ENCODE measurements at regions of chr12 and their contacts with region 1.

Region 1: GRCh38 chr12:10771132-10771733 is 31.2 kb downstream of the TAS2R7 start:
- DNase-seq: peak in 1 of 2 donors; percentile 75
- ATAC-seq: peak; percentile 58 to 74 (median 65)
- H3K4me3 ChIP-seq: no peak overlapping the region
- H3K4me3 Mint-ChIP-seq: no peak overlapping the region
- H3K27ac ChIP-seq: no peak overlapping the region
- H3K27ac Mint-ChIP-seq: no peak overlapping the region
- H3K4me1 ChIP-seq: no peaks in the 10 kb centered on the region
- H3K4me1 Mint-ChIP-seq: no peaks in the 10 kb centered on the region
- H3K27me3 ChIP-seq: peaks cover 22% of the 10 kb centered on the region
- H3K27me3 Mint-ChIP-seq: peaks cover 47 to 64% of the 10 kb centered on the region in 2 donors
- CTCF ChIP-seq: peak; percentile 77

Region 2: DNA sequence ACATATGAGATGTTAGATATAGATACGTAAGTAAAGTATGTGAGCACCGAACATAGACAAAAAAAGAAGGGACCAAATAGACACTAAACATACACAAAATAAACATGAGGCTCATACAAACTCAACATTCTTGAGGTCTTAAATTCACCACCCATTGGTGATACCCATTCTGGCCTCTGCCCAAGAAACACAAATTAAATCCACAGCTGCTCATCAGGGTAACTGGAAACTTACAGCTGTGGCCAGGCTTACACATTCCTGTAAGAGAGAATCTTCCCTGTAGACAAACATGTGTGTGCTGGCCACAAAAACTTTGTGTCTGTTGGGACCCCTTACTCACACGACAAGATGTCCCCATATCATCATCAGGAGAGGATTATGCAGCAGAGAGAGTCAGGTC is 180.3 kb before region 1 on chr12:
- intact Hi-C with region 1: no loop called
- DNase-seq: no peak
- ATAC-seq: no peak
- H3K4me3 ChIP-seq: no peak overlapping the region
- H3K4me3 Mint-ChIP-seq: no peak overlapping the region
- H3K27ac ChIP-seq: no peak overlapping the region
- H3K27ac Mint-ChIP-seq: no peak overlapping the region
- H3K4me1 ChIP-seq: no peaks in the 10 kb centered on the region
- H3K4me1 Mint-ChIP-seq: no peaks in the 10 kb centered on the region
- H3K27me3 ChIP-seq: no peaks in the 10 kb centered on the region
- H3K27me3 Mint-ChIP-seq: no peaks in the 10 kb centered on the region
- CTCF ChIP-seq: no peak

Region 3: DNA sequence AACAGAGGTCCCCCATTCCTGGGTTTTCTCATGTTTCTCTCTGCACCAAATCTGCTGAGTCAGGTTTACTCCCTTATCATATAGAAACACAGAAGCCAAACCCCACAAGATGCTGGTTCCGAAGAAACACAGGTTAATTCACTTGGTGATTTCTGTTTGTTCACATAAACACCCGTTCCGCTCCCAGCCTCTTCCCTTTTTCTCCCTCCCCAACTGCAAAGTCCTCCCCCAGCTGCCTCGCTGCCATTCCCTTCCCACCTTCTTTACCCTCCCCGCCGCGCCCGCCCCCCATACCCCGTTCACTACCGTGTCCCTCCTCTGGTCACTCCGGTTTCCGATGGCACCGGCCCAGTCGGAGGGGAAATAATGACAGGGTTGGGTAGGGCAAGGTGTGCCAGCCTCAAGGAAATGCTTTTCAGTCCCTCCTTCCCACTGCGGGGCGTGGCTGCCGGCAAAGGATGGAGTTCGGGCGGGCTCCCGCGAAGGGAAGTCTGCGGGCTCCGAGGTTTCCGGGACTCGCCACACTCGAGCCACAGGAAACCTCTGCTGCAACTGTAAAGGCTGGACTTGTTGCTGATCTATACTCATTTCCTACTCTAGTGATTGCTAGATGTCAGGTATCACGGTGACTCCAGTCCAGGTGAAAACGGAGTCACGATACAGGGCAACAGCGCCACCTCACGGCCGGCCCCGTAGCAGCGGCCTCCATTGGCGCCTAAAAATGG is 97.4 kb before region 1 on chr12 and contains the start of gene STYK1:
- intact Hi-C with region 1: no loop called
- DNase-seq: peak; percentile 65 to 86
- ATAC-seq: peak; percentile 59 to 80 (median 76)
- H3K4me3 ChIP-seq: peak within 1 kb of the TSS; percentile 34
- H3K4me3 Mint-ChIP-seq: peak within 1 kb of the TSS; percentile 80
- H3K27ac ChIP-seq: peak within 1 kb of the TSS; percentile 40
- H3K27ac Mint-ChIP-seq: peak within 1 kb of the TSS; percentile 64 to 74
- H3K4me1 ChIP-seq: peaks cover 30% of the 10 kb centered on the region
- H3K4me1 Mint-ChIP-seq: peaks cover 42 to 48% of the 10 kb centered on the region in 2 donors
- H3K27me3 ChIP-seq: peaks cover 20% of the 10 kb centered on the region
- H3K27me3 Mint-ChIP-seq: peaks cover 22 to 40% of the 10 kb centered on the region in 2 donors
- CTCF ChIP-seq: peak; percentile 94
- total RNA-seq, gene STYK1: 2.0 to 2.6 (median 2.4) TPM

Region 4: DNA sequence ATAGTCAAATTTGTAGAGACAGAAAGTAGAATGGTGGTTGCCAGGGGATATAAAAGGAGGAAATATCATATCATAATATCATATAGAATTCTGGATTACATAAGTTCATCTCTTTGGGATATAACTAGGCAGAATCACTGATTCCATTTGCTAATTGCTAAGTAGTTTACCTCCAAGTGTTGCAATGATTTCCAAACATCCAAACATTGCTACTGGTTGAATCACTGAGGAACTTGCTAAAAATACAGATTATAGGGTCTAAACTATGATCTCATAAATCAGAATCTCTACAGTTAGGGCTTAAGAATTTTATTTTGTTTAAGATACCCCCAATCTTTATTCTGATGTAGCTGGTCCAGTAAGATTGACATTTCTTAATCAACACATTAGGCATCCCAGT is 431.6 kb after region 1 on chr12:
- intact Hi-C with region 1: loop called (anchors 1 kb)
- DNase-seq: no peak
- ATAC-seq: no peak
- H3K4me3 ChIP-seq: no peak overlapping the region
- H3K4me3 Mint-ChIP-seq: no peak overlapping the region
- H3K27ac ChIP-seq: no peak overlapping the region
- H3K27ac Mint-ChIP-seq: no peak overlapping the region
- H3K4me1 ChIP-seq: no peaks in the 10 kb centered on the region
- H3K4me1 Mint-ChIP-seq: no peaks in the 10 kb centered on the region
- H3K27me3 ChIP-seq: no peaks in the 10 kb centered on the region
- H3K27me3 Mint-ChIP-seq: no peaks in the 10 kb centered on the region
- CTCF ChIP-seq: no peak

Region 5: GRCh38 chr12:11486623-11487444 is 715.6 kb after region 1 on chr12:
- intact Hi-C with region 1: loop called (anchors 1 kb)
- DNase-seq: peak; percentile 72 to 94
- ATAC-seq: peak; percentile 94 to 99 (median 99)
- H3K4me3 ChIP-seq: no peak overlapping the region
- H3K4me3 Mint-ChIP-seq: no peak overlapping the region
- H3K27ac ChIP-seq: no peak overlapping the region
- H3K27ac Mint-ChIP-seq: no peak overlapping the region
- H3K4me1 ChIP-seq: no peaks in the 10 kb centered on the region
- H3K4me1 Mint-ChIP-seq: peaks cover 6 to 10% of the 10 kb centered on the region in 2 donors
- H3K27me3 ChIP-seq: no peaks in the 10 kb centered on the region
- H3K27me3 Mint-ChIP-seq: peaks cover 3 to 34% of the 10 kb centered on the region in 2 donors
- CTCF ChIP-seq: peak; percentile 100

Region 6: DNA sequence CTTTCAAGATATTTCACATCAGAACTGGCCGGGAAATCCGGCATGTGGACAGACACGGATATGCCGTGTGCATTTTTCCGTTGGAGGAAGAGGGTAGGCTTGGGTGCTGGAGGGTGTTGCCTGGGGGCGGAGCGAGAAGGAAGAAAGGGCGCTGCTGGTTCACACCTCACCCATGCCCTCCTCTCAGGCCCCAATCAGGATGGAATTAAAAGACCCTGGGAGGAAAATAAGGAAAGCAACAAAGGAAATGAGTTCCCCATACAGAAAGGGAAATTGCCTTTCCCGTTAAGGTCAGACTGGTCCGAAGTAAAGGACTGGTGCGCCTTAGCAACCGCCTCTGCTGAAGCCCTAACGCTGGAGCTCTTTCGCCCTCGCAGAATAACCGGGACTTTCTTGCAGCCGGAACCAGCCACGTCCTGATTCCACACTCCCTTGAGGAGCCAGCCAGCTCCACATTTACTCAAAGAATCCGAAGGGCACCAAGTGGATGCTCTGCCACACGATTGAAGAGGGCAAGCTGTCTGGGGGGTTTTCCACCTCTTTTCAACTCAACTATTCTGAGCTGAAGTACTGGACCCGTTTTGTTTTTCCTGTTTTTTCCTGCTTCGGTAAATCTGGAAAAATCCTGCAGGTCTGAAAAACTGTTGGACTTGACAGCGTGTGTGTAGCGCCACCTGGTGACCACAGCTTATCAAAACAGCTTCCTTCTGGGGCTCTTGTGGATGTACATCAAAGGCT is 1261.8 kb after region 1 on chr12:
- intact Hi-C with region 1: loop called (anchors 10 kb)
- DNase-seq: peak; percentile 39 to 86
- ATAC-seq: peak; percentile 71 to 83 (median 77)
- H3K4me3 ChIP-seq: peak overlapping the region; percentile 44
- H3K4me3 Mint-ChIP-seq: peak overlapping the region; percentile 74
- H3K27ac ChIP-seq: no peak overlapping the region
- H3K27ac Mint-ChIP-seq: peak overlapping the region in 1 of 2 donors; percentile 6
- H3K4me1 ChIP-seq: peaks cover 16% of the 10 kb centered on the region
- H3K4me1 Mint-ChIP-seq: peaks cover 12 to 19% of the 10 kb centered on the region in 2 donors
- H3K27me3 ChIP-seq: no peaks in the 10 kb centered on the region
- H3K27me3 Mint-ChIP-seq: peaks cover 9 to 42% of the 10 kb centered on the region in 2 donors
- CTCF ChIP-seq: peak; percentile 93

Measured in natural killer cell (primary cell).